Motor neuron (in vitro differentiated cells): ENCODE measurements at regions of chr15 and their contacts with region 1.

Region 1: DNA sequence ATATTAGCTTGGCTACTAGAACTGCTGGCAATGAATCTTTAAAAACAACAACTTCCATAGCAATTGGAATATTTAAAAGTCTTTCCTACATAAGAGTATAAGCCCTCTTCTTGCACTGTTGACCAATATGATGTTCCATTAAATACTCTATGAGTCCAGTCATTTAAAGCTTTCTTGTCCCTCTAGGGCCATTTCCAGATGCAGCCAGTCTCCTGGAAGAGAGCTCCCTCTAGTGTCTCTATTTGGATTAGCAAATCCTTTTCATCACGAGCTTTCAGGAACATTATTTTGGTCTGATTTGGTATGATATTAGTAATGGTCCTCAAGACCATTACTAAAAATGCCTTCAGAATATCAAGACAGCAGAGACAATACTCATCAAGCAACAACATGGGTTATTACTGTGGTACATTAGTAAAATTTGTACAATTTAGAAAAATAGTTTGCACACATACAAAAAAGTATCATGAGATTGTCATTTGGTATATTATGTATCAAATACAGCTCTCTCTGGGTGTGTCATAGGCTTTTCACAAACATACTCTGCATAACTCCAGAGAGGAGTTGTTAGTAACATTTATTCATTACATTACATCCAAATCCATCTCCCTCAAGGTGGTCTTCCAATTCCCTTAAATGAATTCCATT is 101.3 kb downstream of the DPH6 start:
- ATAC-seq: peak in 2 of 8 experiments; percentile 46 to 51
- H3K4me3 ChIP-seq: no peak overlapping the region
- H3K27ac ChIP-seq: no peak overlapping the region
- H3K4me1 ChIP-seq: no peaks in the 10 kb centered on the region

Region 2: DNA sequence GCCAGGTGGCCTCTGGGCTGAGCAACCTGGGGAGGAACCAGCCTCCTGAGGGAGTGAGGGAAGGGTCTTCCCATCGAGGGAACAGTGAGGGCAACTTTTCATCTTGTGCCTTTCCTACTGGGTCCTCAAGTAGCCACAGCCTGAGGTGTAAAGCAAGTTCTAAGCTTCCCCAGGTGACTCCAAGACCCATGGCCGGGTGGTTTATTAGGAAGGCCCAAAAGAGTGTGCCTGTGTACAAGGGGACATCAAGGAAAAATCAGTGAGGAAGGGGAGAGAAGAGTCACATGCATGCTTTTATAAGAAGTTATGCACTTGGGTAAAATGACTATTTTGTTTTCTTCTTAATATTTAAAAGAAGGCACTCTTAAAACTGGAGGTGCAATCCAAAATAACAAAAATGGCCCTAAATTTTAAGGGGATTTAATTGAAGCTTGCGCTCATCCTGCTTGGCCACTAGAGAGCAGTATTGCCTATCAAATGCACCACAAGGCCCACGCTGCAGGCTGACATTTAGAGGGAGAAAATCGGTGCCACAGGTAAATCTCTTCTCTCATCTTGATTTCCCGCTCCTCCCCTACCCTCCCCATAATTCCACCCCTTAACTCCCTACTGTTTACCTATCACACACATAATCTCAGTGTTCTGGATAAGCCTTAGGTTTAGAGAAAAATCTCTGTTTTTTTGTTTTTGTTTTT is 366.3 kb before region 1 on chr15:
- in situ Hi-C with region 1: loop called in 2 of 9 experiments (anchors 10 to 25 kb)
- ATAC-seq: peak in 6 of 8 experiments; percentile 33 to 70 (median 46)
- H3K4me3 ChIP-seq: no peak overlapping the region
- H3K27ac ChIP-seq: no peak overlapping the region
- H3K4me1 ChIP-seq: no peaks in the 10 kb centered on the region

Region 3: GRCh38 chr15:35580606-35581005 is 135.9 kb after region 1 on chr15:
- in situ Hi-C with region 1: no loop called
- ATAC-seq: no peak
- H3K4me3 ChIP-seq: no peak overlapping the region
- H3K27ac ChIP-seq: no peak overlapping the region
- H3K4me1 ChIP-seq: no peaks in the 10 kb centered on the region